Naive thymus-derived CD4-positive, alpha-beta T cell (primary cell): ENCODE measurements at regions of chr2 and their contacts with region 1.

Region 1: GRCh38 chr2:69643602-69644505 is at the start of gene AAK1:
- DNase-seq: peak; percentile 69 to 89 (median 85)
- ATAC-seq: peak; percentile 71
- H3K4me3 ChIP-seq: peak within 1 kb of the TSS; percentile 80
- H3K4me3 Mint-ChIP-seq: peak within 1 kb of the TSS; percentile 95 to 99 (median 98)
- H3K27ac ChIP-seq: peak within 1 kb of the TSS; percentile 86
- H3K27ac Mint-ChIP-seq: peak within 1 kb of the TSS; percentile 94 to 99 (median 96)
- H3K4me1 ChIP-seq: peaks cover 43 to 50% of the 10 kb centered on the region in 2 donors
- H3K4me1 Mint-ChIP-seq: peaks cover 51 to 69% (median 59%) of the 10 kb centered on the region in 7 donors
- H3K27me3 ChIP-seq: no peaks in the 10 kb centered on the region
- H3K27me3 Mint-ChIP-seq: no peaks in the 10 kb centered on the region
- total RNA-seq, gene AAK1: 114 to 253 (median 218) TPM

Region 2: DNA sequence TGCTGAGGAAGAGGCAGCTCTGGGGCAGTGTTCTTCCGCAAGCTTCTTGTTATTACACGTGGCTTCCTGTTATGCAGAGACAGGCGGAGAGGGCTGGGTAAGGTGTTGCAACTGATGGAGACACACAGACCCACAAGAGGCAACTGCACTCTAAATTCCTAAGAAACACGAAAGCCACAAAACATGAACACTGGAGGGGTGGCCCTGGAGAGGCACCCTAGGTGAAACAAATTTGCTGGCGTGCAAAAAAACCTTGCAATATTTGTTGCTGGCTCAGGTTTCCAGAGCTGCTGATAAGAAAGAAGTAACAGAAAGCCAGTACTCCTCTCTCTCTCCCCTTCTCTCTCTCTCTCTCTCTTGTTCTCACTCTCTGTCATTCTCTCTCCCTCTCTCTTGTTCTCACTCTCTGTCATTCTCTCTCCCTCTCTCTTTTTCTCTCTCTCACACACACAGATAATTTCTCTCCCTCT is 877.4 kb before region 1 on chr2:
- CTCF ChIA-PET with region 1: no interaction called
- POLR2A ChIA-PET with region 1: no interaction called
- intact Hi-C with region 1: loop called in 1 of 2 experiments (anchors 10 kb)
- DNase-seq: peak; percentile 27 to 85 (median 78)
- ATAC-seq: peak; percentile 86
- H3K4me3 ChIP-seq: peak overlapping the region; percentile 36
- H3K4me3 Mint-ChIP-seq: peak overlapping the region; percentile 77 to 94 (median 82)
- H3K27ac ChIP-seq: peak overlapping the region; percentile 82
- H3K27ac Mint-ChIP-seq: peak overlapping the region in 8 of 9 donors; percentile 93 to 99 (median 97)
- H3K4me1 ChIP-seq: peaks cover 97 to 98% of the 10 kb centered on the region in 2 donors
- H3K4me1 Mint-ChIP-seq: peaks cover 70 to 100% (median 99%) of the 10 kb centered on the region in 7 donors
- H3K27me3 ChIP-seq: no peaks in the 10 kb centered on the region
- H3K27me3 Mint-ChIP-seq: no peaks in the 10 kb centered on the region

Region 3: DNA sequence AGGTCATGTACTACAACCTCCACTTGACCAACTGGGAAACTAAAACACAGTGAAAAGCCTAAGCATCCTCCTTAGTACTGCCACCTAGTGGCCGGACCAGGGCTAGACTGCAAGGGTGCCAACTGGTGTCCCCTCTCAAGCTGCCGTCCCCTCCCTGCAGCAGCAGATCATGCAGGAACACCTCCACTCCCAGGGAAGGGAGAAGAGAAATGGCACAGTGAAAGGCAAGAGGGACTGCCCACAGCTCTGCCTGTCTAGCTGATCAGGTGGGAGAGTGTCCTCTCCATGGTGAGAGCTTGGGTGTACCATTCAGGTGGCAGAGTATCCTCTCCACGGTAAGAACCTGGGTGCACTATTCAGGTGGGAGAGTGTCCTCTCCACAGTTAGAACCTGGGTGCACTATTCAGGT is 78.4 kb before region 1 on chr2:
- CTCF ChIA-PET with region 1: interaction called, 35 read pairs
- POLR2A ChIA-PET with region 1: interaction called, 31 read pairs
- intact Hi-C with region 1: loop called (anchors 1 to 5 kb)
- DNase-seq: peak; percentile 39 to 75 (median 51)
- ATAC-seq: peak; percentile 88
- H3K4me3 ChIP-seq: no peak overlapping the region
- H3K4me3 Mint-ChIP-seq: peak overlapping the region in 9 of 10 donors; percentile 63 to 84 (median 75)
- H3K27ac ChIP-seq: no peak overlapping the region
- H3K27ac Mint-ChIP-seq: peak overlapping the region; percentile 36 to 94 (median 77)
- H3K4me1 ChIP-seq: peaks cover 35 to 74% of the 10 kb centered on the region in 2 donors
- H3K4me1 Mint-ChIP-seq: peaks cover 63 to 99% (median 96%) of the 10 kb centered on the region in 7 donors
- H3K27me3 ChIP-seq: no peaks in the 10 kb centered on the region
- H3K27me3 Mint-ChIP-seq: no peaks in the 10 kb centered on the region

Region 4: DNA sequence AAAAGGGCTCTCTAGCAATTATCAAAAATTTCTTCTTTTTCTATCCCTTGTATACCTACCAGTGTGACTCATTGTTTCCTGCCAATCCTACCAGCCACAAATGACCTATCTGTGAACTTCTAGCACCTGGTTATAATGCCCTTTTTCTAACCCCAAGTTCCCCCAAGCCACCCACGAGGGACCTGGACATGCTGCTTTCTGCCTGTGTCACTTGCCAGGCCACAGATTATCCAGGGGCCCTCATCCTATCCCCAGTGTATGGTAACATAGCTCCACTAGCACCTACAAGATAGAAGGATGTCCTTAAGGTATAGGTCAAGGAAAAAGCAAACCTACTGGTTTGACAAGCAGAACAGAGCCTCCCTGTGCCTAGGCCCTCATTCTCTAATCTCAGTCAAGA is 27.1 kb before region 1 on chr2:
- CTCF ChIA-PET with region 1: interaction called, 5 read pairs
- POLR2A ChIA-PET with region 1: interaction called, 45 read pairs
- intact Hi-C with region 1: no loop called
- DNase-seq: peak in 1 of 9 donors; percentile 45
- ATAC-seq: no peak
- H3K4me3 ChIP-seq: no peak overlapping the region
- H3K4me3 Mint-ChIP-seq: peak overlapping the region in 6 of 10 donors; percentile 8 to 52 (median 34)
- H3K27ac ChIP-seq: no peak overlapping the region
- H3K27ac Mint-ChIP-seq: peak overlapping the region in 6 of 9 donors; percentile 22 to 90 (median 70)
- H3K4me1 ChIP-seq: peaks cover 63 to 68% of the 10 kb centered on the region in 2 donors
- H3K4me1 Mint-ChIP-seq: peaks cover 0 to 45% (median 33%) of the 10 kb centered on the region in 7 donors
- H3K27me3 ChIP-seq: no peaks in the 10 kb centered on the region
- H3K27me3 Mint-ChIP-seq: no peaks in the 10 kb centered on the region

Region 5: GRCh38 chr2:69694894-69695849 is 51.3 kb after region 1 on chr2:
- CTCF ChIA-PET with region 1: interaction called, 58 read pairs
- POLR2A ChIA-PET with region 1: interaction called, 334 read pairs
- intact Hi-C with region 1: loop called (anchors 1 kb)
- DNase-seq: peak in 1 of 9 donors; percentile 29
- ATAC-seq: no peak
- H3K4me3 ChIP-seq: peak overlapping the region; percentile 22
- H3K4me3 Mint-ChIP-seq: peak overlapping the region; percentile 20 to 89 (median 60)
- H3K27ac ChIP-seq: peak overlapping the region; percentile 64
- H3K27ac Mint-ChIP-seq: peak overlapping the region; percentile 43 to 99 (median 94)
- H3K4me1 ChIP-seq: peaks cover 46 to 87% of the 10 kb centered on the region in 2 donors
- H3K4me1 Mint-ChIP-seq: peaks cover 49 to 98% (median 96%) of the 10 kb centered on the region in 7 donors
- H3K27me3 ChIP-seq: no peaks in the 10 kb centered on the region
- H3K27me3 Mint-ChIP-seq: no peaks in the 10 kb centered on the region

Region 6: GRCh38 chr2:69816923-69817542 is 173.2 kb after region 1 on chr2:
- CTCF ChIA-PET with region 1: no interaction called
- POLR2A ChIA-PET with region 1: interaction called, 3 read pairs
- intact Hi-C with region 1: loop called in 1 of 2 experiments (anchors 2 kb)
- DNase-seq: peak in 8 of 9 donors; percentile 63 to 84 (median 79)
- ATAC-seq: peak; percentile 86
- H3K4me3 ChIP-seq: no peak overlapping the region
- H3K4me3 Mint-ChIP-seq: no peak overlapping the region
- H3K27ac ChIP-seq: no peak overlapping the region
- H3K27ac Mint-ChIP-seq: no peak overlapping the region
- H3K4me1 ChIP-seq: no peaks in the 10 kb centered on the region
- H3K4me1 Mint-ChIP-seq: peaks cover 0 to 15% (median 5%) of the 10 kb centered on the region in 7 donors
- H3K27me3 ChIP-seq: no peaks in the 10 kb centered on the region
- H3K27me3 Mint-ChIP-seq: no peaks in the 10 kb centered on the region

Region 7: GRCh38 chr2:70142590-70143313 is 498.9 kb after region 1 on chr2:
- CTCF ChIA-PET with region 1: no interaction called
- POLR2A ChIA-PET with region 1: no interaction called
- intact Hi-C with region 1: loop called (anchors 2 to 10 kb)
- DNase-seq: peak; percentile 99 to 100 (median 100)
- ATAC-seq: peak; percentile 85
- H3K4me3 ChIP-seq: peak overlapping the region; percentile 81
- H3K4me3 Mint-ChIP-seq: peak overlapping the region; percentile 83 to 96 (median 91)
- H3K27ac ChIP-seq: peak overlapping the region; percentile 97
- H3K27ac Mint-ChIP-seq: peak overlapping the region; percentile 97 to 99 (median 97)
- H3K4me1 ChIP-seq: peaks cover 27 to 39% of the 10 kb centered on the region in 2 donors
- H3K4me1 Mint-ChIP-seq: peaks cover 37 to 69% (median 55%) of the 10 kb centered on the region in 7 donors
- H3K27me3 ChIP-seq: no peaks in the 10 kb centered on the region
- H3K27me3 Mint-ChIP-seq: peaks cover 0 to 2% (median 0%) of the 10 kb centered on the region in 5 donors